ENCODE measurements at regions of chr13 and their contacts with region 1.

Region 1: DNA sequence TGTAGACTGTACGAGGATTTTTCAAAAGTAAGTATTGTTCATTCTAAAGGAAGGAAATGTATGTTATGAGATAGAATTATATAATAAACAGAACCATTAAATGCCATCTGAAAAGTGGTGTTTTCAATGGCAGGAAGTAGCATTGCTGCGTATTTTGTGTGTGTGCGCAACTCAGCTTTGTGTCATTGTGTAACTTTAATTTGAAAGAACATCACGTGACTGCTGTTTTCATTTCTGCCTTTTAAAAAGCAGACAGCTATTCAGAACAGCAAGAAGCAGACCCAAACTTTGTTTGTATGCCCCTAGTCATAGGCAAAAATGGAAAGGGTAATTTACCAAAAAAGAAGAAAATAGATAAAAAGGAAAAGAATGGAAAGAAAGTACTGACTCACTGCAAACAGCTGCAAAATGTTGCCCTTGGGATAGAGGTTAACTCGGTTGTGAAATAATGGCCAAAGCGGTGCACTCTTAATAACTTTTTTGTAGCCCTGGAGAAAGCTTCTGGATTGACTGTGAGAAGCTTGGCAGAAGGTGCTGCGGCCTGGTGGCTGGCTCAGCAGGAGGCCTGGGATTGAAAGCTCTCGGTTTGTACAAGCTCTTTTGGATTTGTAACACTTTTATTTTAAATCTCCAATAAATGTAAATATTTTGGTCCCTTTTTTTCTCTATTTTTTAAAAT is 97.3 kb downstream of the GGACT start:
- DNase-seq: no peak
- ATAC-seq: no peak
- H3K4me3 ChIP-seq: no peak overlapping the region
- H3K4me3 Mint-ChIP-seq: no peak overlapping the region
- H3K27ac ChIP-seq: no peak overlapping the region
- H3K27ac Mint-ChIP-seq: no peak overlapping the region
- H3K4me1 ChIP-seq: no peaks in the 10 kb centered on the region
- H3K4me1 Mint-ChIP-seq: no peaks in the 10 kb centered on the region
- H3K27me3 ChIP-seq: no peaks in the 10 kb centered on the region
- H3K27me3 Mint-ChIP-seq: no peaks in the 10 kb centered on the region
- CTCF ChIP-seq: no peak

Region 2: DNA sequence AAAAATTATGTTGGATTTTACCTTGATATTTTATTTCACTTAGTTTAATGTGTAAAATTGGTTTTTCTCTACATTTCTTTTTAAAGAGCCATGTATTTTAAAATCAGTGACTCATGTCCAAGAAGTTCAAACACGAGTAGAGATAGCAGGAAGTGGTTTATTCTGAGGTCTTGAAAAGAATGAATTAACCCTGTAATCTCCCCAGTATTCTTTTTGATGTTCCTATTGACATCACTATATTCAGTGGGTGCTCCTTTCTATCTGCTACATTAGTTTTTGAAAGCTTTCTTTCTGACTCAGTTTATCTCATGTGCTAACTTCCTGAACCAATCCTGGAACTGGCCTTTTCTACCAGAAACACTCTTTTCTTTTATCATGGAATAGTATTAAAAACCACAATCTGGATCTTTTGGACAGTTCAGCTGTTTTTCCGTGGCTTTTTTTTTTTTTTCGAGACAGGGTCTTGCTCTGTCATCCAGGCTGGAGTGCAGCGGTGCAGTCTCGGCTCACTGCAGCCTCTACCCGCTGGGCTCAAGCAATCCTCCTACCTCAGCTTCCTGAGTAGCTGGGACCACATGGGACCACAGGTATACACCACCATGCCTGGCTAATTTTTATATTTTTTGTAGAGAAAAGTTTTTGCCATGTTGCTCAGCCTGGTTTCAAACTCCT is 287.5 kb before region 1 on chr13:
- CTCF ChIA-PET with region 1: no interaction called
- POLR2A ChIA-PET with region 1: no interaction called
- intact Hi-C with region 1: no loop called
- DNase-seq: peak in 2 of 9 experiments; percentile 29 to 58
- ATAC-seq: peak; percentile 77
- H3K4me3 ChIP-seq: no peak overlapping the region
- H3K4me3 Mint-ChIP-seq: peak overlapping the region; percentile 47
- H3K27ac ChIP-seq: no peak overlapping the region
- H3K27ac Mint-ChIP-seq: no peak overlapping the region
- H3K4me1 ChIP-seq: peaks cover 20% of the 10 kb centered on the region
- H3K4me1 Mint-ChIP-seq: peaks cover 20% of the 10 kb centered on the region
- H3K27me3 ChIP-seq: no peaks in the 10 kb centered on the region
- H3K27me3 Mint-ChIP-seq: no peaks in the 10 kb centered on the region
- CTCF ChIP-seq: no peak

Region 3: GRCh38 chr13:100454876-100455275 is 36.4 kb before region 1 on chr13:
- CTCF ChIA-PET with region 1: no interaction called
- POLR2A ChIA-PET with region 1: no interaction called
- intact Hi-C with region 1: loop called in 1 of 2 experiments (anchors 1 kb)
- DNase-seq: no peak
- ATAC-seq: no peak
- H3K4me3 ChIP-seq: no peak overlapping the region
- H3K4me3 Mint-ChIP-seq: no peak overlapping the region
- H3K27ac ChIP-seq: no peak overlapping the region
- H3K27ac Mint-ChIP-seq: no peak overlapping the region
- H3K4me1 ChIP-seq: no peaks in the 10 kb centered on the region
- H3K4me1 Mint-ChIP-seq: no peaks in the 10 kb centered on the region
- H3K27me3 ChIP-seq: no peaks in the 10 kb centered on the region
- H3K27me3 Mint-ChIP-seq: no peaks in the 10 kb centered on the region
- CTCF ChIP-seq: no peak

Region 4: DNA sequence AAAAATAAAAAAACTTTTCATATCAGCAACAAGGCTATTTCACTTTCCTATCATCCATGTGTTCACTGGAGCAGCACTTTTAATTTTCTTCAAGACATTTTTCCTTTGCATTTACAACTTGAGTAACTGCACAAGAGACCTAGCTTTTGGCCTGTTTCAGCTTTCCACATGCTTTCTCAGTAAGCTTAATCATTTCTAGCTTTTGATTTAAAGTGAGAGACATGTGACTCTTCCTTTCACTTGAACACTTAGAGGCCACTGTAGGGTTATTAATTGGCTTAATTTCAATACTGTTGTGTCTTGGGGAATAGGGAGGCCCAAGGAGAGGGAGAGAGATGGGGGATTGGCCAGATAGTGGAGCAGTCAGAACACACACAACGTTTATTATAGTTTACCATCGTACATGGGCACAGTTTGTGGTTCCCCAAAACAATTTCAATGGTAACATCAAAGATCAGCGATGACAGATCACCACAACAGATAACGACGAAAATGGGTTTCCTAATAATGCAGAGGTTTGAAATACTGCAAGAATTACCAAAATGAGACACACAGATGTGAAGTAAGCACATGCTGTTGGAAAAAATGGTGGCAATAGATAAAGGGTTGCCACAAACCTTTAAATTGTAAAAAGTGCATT is 20.3 kb before region 1 on chr13:
- CTCF ChIA-PET with region 1: no interaction called
- POLR2A ChIA-PET with region 1: no interaction called
- intact Hi-C with region 1: no loop called
- DNase-seq: no peak
- ATAC-seq: no peak
- H3K4me3 ChIP-seq: no peak overlapping the region
- H3K4me3 Mint-ChIP-seq: no peak overlapping the region
- H3K27ac ChIP-seq: no peak overlapping the region
- H3K27ac Mint-ChIP-seq: no peak overlapping the region
- H3K4me1 ChIP-seq: no peaks in the 10 kb centered on the region
- H3K4me1 Mint-ChIP-seq: peaks cover 4% of the 10 kb centered on the region
- H3K27me3 ChIP-seq: no peaks in the 10 kb centered on the region
- H3K27me3 Mint-ChIP-seq: no peaks in the 10 kb centered on the region
- CTCF ChIP-seq: no peak

Measured in CD8-positive, alpha-beta T cell (primary cell).